Heart left ventricle (tissue), 16 donors: ENCODE measurements at regions of chr14 and their contacts with region 1.

Region 1: DNA sequence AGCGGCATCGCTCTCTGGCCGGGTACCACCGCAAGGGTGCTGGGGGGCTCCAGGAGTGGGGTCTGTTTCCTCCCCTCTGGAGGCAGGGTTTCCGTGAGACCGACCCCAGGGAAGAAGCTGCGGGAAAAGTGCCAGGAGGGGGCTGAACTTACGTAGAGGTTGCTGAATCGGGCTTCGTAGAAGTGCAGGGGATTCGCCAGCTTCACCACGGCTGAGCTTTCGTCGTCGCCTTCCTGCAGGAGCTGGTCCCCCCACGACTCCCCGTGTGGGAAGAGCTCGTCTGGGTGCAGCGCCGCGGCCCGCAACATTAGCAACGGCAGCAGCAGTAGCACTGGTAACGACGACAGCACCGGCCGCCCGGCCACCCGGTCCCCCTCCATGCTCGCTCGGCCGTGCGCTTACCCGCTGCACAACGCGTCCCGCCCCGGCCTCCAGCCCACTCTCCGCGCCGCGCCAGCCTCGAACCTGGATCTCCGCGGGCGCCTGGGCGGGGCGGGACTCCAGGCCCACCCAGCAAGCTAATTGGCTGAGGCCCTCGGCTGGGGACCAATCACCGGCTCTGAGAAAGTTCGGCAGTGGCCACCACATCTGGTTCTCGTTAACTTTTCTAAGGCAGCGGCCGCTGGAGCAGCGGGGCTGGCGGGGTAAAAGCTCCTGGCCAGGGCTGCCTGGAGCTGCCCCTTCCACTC is at the start of gene NID2:
- DNase-seq: peak; percentile 91 to 95 (median 93)
- ATAC-seq: peak; percentile 91 to 94 (median 92)
- H3K4me3 ChIP-seq: peak within 1 kb of the TSS; percentile 64 to 89 (median 74)
- H3K27ac ChIP-seq: peak within 1 kb of the TSS; percentile 51 to 97 (median 89)
- H3K4me1 ChIP-seq: peaks cover 0 to 61% (median 33%) of the 10 kb centered on the region in 12 donors
- H3K27me3 ChIP-seq: peaks cover 0 to 45% (median 0%) of the 10 kb centered on the region in 9 donors
- CTCF ChIP-seq: peak in 3 of 12 donors; percentile 6 to 32 (median 19)
- POLR2A ChIP-seq: peak; percentile 5 to 91
- total RNA-seq, gene NID2: 32.0 to 77.4 (median 40.9) TPM

Region 2: DNA sequence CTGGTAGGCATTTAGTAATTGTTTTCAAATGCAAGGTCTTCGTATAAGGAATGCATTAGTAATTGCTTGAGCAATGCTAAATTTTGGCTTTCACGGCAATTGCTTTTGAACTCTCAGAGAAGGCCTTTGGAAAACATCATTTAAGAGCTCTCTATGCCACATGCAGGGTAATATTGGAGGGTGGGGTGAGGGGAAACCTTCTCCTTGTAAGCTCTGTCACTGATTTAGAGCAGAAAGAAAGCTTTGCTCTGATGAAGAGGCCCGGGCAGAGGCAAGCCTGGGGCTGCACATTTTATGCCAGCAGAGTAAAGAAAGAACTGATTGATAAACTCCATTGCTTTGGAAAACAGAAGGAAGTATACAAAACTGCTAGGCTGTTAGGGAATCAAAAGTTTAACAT is 1044.8 kb before region 1 on chr14:
- intact Hi-C with region 1: no loop called
- DNase-seq: no peak
- ATAC-seq: no peak
- H3K4me3 ChIP-seq: no peak overlapping the region
- H3K27ac ChIP-seq: peak overlapping the region in 1 of 12 donors; percentile 32
- H3K4me1 ChIP-seq: peaks cover 0 to 15% (median 0%) of the 10 kb centered on the region in 12 donors
- H3K27me3 ChIP-seq: no peaks in the 10 kb centered on the region
- CTCF ChIP-seq: no peak
- POLR2A ChIP-seq: no peak

Region 3: DNA sequence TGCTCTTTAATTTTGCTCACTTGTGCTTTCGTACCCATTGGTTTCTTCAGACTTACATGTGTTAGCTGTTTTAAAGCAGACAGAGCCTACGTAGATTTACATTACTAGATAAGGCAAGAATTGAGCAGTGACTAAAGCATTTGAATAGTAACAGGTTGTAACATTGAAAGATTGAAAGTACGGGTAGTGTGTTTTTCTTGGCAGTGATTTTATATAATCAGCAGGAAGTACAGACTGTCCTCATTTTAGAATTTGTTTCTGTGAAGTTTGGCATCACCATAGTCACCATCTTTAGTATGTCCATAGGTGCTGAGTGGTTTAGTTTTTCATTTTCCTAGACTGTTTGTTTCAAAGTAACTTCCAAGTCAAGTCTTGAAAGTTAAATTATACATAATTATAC is 65.4 kb before region 1 on chr14:
- intact Hi-C with region 1: loop called in 8 of 10 experiments (anchors 5 kb)
- DNase-seq: no peak
- ATAC-seq: peak; percentile 71 to 89 (median 84)
- H3K4me3 ChIP-seq: no peak overlapping the region
- H3K27ac ChIP-seq: peak overlapping the region; percentile 21 to 79 (median 56)
- H3K4me1 ChIP-seq: peaks cover 7 to 58% (median 27%) of the 10 kb centered on the region in 12 donors
- H3K27me3 ChIP-seq: no peaks in the 10 kb centered on the region
- CTCF ChIP-seq: no peak
- POLR2A ChIP-seq: no peak

Region 4: DNA sequence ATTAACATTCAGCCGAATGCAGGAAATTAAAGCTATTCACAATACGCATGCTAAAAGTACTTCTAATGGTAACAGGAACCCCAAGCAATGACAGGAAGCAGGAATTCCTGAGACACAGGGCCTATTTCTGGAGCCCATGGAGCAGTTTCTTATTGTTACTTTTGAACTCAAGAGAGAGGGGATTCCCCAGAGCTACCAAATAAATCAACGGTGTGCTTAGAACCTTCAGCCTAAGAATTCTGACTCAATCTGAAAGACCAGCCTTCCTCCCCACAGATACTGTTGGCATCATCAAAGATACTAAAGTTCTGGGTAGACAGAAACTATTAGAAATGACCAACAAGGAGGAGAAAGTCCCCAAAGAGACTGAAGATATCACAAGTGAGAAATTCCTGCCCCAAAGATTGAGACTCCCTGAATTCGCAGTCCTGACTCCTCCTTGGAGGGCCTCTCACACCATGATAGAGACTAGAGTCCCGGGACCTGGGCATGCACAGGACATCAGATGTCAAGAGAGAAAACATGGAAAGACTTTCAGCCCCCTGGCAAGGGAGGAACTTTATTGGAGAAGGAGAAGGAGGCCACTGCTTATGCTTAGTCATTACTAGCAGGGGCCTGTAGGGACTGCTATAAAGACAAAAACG is 46.7 kb before region 1 on chr14:
- intact Hi-C with region 1: loop called in 3 of 10 experiments (anchors 5 kb)
- DNase-seq: peak in 1 of 5 donors; percentile 37
- ATAC-seq: peak in 3 of 4 donors; percentile 4 to 62 (median 8)
- H3K4me3 ChIP-seq: no peak overlapping the region
- H3K27ac ChIP-seq: peak overlapping the region in 9 of 12 donors; percentile 23 to 76 (median 63)
- H3K4me1 ChIP-seq: peaks cover 19 to 98% (median 78%) of the 10 kb centered on the region in 12 donors
- H3K27me3 ChIP-seq: no peaks in the 10 kb centered on the region
- CTCF ChIP-seq: no peak
- POLR2A ChIP-seq: no peak

Region 5: DNA sequence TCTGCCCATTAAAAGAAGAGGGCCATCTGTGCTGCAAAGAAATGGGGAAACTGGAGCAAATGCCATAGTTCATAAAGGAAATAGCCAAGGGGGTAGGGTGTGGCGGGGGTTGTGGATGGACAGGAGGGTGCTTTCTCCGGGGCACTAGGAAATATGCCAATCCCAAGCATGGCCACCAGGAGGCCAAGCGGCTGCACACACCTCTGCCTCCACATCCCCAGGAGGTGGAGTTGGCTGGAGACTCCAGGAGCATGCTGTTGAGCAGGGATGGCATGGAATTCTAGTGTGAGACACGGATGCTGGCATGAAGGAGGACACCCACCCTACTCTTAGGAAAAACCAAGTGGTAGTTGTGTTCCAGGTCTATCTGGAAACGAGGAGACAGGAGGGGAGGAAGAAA is 25.1 kb before region 1 on chr14:
- intact Hi-C with region 1: loop called in 2 of 10 experiments (anchors 2 kb)
- DNase-seq: peak in 2 of 5 donors; percentile 40 to 49
- ATAC-seq: peak in 3 of 4 donors; percentile 43 to 48 (median 44)
- H3K4me3 ChIP-seq: no peak overlapping the region
- H3K27ac ChIP-seq: peak overlapping the region in 4 of 12 donors; percentile 3 to 32 (median 16)
- H3K4me1 ChIP-seq: peaks cover 3 to 63% (median 55%) of the 10 kb centered on the region in 12 donors
- H3K27me3 ChIP-seq: no peaks in the 10 kb centered on the region
- CTCF ChIP-seq: peak; percentile 41 to 69 (median 52)
- POLR2A ChIP-seq: no peak

Region 6: DNA sequence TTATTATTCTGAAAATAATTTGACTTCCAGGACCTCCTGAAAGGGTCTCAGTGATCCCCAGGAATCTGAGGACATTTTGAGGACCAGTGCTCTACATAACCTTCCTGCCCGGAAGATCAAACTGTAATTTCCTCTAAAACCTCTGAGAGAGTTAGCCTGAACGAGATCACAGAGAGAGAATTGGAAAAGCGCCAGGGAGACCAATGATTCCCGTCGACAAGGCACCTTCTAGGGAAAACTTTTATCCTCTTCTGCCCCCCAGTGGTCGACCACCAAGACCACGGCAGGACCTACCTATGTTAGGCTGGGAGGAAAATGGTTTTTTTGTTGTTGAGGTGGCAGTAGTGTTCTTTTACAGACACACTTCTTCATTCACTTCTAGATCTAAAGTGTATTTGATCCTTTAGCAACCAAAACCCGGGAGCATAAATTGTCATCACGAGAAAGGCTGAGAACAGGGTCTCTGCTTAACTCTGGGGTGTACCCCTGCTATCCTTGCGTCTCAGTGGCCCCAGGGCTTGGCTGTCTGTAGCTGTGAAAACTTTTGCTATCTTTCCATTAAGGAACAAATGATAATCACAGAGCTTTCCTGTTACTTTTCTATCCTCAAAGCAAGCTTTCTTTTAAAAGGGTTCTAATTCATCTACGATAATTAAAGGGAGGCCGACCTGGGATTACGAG is 63.0 kb after region 1 on chr14:
- intact Hi-C with region 1: loop called in 6 of 10 experiments (anchors 5 to 10 kb)
- DNase-seq: peak; percentile 63 to 93 (median 83)
- ATAC-seq: peak; percentile 83 to 95 (median 93)
- H3K4me3 ChIP-seq: peak overlapping the region in 2 of 12 donors; percentile 5 to 13
- H3K27ac ChIP-seq: peak overlapping the region in 3 of 12 donors; percentile 23 to 48 (median 47)
- H3K4me1 ChIP-seq: peaks cover 0 to 13% (median 8%) of the 10 kb centered on the region in 12 donors
- H3K27me3 ChIP-seq: no peaks in the 10 kb centered on the region
- CTCF ChIP-seq: peak; percentile 58 to 87 (median 83)
- POLR2A ChIP-seq: no peak